Naive thymus-derived CD8-positive, alpha-beta T cell (primary cell): ENCODE measurements at regions of chr3 and their contacts with region 1.

Region 1: DNA sequence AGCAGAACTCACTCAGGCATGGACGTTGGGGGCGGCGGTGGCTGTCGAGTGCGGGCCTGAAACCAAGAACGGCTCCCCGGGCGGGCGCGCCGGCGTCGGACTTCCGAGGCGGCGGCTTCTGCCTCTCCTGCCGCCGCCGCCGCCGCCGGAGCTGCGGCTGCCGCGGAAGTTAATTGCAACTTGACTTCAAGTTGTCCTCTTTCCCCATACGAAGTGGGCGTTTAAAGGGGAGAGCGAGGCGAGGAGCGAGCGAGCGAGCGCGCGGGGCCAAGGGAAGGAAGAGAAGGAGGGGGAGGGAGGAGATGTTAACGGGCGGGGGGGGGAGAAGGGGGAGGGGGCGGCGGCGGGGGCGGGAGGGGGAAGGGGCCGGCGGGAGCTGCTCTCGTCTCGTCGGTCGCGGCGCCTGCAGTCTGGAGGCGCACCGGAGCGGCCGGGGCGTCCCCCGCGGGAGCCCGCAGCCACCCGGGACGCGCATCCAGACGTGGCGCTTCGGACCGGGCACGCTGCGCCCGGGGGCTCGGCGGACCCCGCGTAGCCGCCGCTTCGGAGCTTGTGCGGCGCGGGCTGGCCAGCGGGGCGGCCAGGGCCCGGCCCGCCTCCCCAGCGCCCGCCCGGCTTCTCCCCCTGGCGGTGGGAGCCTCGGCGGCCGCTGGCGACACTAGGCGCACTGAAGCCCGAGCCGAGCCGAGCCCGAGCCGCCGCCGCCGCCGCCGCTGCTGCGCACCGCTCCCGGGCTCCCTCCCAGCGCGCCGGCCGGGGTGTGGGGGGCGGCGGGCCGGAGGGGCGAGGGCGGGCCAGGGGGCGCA is 19.7 kb upstream of the SATB1 start:
- DNase-seq: peak; percentile 78 to 94 (median 84)
- ATAC-seq: peak; percentile 69 to 70
- H3K4me3 Mint-ChIP-seq: peak overlapping the region; percentile 87 to 99 (median 96)
- H3K27ac Mint-ChIP-seq: peak overlapping the region; percentile 94 to 99 (median 96)
- H3K4me1 Mint-ChIP-seq: peaks cover 14 to 60% (median 43%) of the 10 kb centered on the region in 4 donors
- H3K27me3 Mint-ChIP-seq: no peaks in the 10 kb centered on the region

Region 2: DNA sequence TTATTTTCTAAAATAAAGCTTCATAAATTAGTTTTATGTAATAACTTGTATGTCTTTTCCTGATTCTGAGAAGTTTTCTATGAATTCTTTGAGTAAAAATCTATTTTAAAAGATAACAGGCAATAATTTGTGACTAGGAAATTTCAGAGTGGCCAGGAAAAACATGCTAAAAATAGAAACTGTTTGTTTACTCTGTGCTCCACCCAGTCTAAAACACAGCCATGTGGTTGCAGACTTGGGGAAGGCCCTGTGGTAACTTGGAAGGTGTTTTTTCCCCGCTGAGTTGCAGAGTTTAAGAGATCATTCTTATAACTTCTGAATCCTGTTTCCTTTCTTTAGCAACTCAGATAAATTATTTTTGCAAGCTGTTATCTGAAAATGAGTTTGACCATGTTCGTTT is 1538.1 kb before region 1 on chr3:
- POLR2A ChIA-PET with region 1: no interaction called
- DNase-seq: peak in 2 of 10 donors; percentile 24 to 34
- ATAC-seq: peak; percentile 50 to 71
- H3K4me3 Mint-ChIP-seq: peak overlapping the region in 9 of 10 donors; percentile 45 to 60 (median 54)
- H3K27ac Mint-ChIP-seq: peak overlapping the region in 8 of 10 donors; percentile 62 to 96 (median 72)
- H3K4me1 Mint-ChIP-seq: peaks cover 46 to 92% (median 80%) of the 10 kb centered on the region in 4 donors
- H3K27me3 Mint-ChIP-seq: no peaks in the 10 kb centered on the region

Region 3: DNA sequence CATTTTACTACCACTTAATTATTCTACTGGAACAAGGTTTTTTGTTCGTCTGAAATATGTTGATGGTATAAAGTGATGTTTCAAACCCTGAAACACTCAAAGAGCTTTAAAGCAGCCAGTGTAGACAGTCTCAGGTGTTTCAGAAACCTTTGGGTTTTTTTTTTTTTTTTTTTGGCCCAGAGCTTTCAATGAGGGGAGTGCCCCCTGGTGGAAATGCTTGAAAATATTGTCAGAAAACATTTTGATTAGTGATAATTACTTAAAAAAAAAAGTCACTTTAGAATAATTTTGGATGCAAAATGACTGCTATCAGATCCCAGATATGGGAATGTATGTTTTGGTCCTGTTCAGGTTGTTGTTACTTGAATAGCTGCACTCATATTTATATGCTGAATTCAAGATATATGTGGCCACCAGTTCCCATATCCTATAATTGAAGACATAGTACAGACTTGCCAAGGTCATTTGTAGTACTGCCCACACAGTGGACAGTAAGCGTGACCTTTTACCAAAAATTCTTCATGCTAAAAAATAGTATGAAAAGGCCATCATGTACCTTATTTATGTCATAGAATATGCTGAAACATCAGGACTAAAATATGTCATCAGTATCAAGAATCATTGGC is 55.6 kb before region 1 on chr3:
- POLR2A ChIA-PET with region 1: interaction called, 16 read pairs
- DNase-seq: peak in 4 of 10 donors; percentile 21 to 57 (median 54)
- ATAC-seq: peak; percentile 32 to 53
- H3K4me3 Mint-ChIP-seq: peak overlapping the region in 6 of 10 donors; percentile 5 to 45 (median 40)
- H3K27ac Mint-ChIP-seq: peak overlapping the region in 7 of 10 donors; percentile 43 to 83 (median 48)
- H3K4me1 Mint-ChIP-seq: peaks cover 19 to 84% (median 65%) of the 10 kb centered on the region in 4 donors
- H3K27me3 Mint-ChIP-seq: no peaks in the 10 kb centered on the region

Region 4: DNA sequence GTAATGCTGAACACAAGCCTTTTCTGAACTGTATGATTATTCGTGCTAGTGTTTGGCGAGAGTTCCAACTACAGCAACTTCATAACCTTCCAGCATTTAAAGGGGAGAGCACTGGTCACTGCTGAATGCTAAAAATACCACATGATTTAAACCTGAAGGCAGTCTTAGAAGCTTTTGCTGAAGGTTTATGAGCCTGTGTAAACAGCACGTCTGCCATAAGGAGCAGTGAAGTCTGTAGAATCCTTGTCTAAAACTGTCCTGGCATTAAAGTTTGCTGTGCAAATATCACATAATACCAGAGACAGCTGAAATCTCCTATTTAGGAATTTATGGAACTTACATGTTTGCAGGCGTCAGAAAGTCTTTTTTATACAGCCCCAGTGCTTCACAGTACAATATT is 25.6 kb before region 1 on chr3:
- POLR2A ChIA-PET with region 1: interaction called, 65 read pairs
- DNase-seq: no peak
- ATAC-seq: no peak
- H3K4me3 Mint-ChIP-seq: peak overlapping the region; percentile 62 to 96 (median 84)
- H3K27ac Mint-ChIP-seq: peak overlapping the region; percentile 91 to 99 (median 95)
- H3K4me1 Mint-ChIP-seq: peaks cover 44 to 88% (median 81%) of the 10 kb centered on the region in 4 donors
- H3K27me3 Mint-ChIP-seq: no peaks in the 10 kb centered on the region

Region 5: DNA sequence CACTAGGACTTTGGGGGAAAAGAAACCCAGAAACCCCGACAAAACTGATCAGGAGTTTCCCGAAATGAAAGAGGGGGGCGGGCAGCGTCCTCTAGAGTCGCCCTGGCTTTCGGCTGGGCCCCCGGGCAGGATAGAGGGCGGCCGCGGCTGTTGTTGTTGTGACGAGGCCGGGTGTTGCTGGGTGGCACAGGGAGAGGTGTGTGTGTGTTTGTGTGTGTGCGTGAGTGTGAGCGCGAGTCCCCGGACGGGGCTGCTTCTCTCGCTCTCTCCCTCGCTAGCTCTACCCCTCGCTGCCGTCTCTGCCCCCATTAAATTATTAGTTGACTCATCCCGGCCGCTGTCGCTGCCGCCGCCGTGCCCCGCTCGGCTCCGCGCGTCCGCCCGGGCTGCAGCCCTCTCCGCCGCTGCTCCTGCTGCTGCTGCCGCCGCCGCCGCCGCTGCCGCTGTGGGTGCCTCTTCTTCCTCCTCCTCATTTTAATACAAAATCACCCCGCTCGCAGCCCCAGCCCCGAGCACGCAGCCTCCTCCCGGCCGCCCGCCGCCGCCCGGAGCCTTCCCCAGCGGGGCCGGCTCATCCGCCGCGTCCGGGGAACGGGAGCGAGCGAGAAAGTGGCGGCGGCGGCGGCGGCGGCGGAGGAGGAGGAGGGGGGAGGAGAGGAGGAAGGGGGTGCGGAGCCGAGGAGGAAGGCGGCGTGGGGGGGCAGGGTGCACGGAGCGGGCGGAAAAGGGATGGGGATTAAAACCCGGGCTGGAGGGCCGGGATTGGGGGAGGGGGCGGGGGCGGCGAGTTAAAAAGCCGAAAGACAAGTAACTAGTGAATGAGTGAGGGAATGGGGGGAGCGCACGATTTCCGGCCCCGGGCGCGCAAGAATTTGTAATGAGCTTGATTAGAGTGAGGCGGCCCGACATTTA is 19.8 kb before region 1 on chr3 and contains the start of gene SATB1:
- POLR2A ChIA-PET with region 1: interaction called, 65 read pairs
- DNase-seq: peak; percentile 48 to 81 (median 64)
- ATAC-seq: peak; percentile 18 to 41
- H3K4me3 Mint-ChIP-seq: peak within 1 kb of the TSS; percentile 93 to 99 (median 96)
- H3K27ac Mint-ChIP-seq: peak within 1 kb of the TSS; percentile 94 to 99 (median 99)
- H3K4me1 Mint-ChIP-seq: peaks cover 37 to 79% (median 65%) of the 10 kb centered on the region in 4 donors
- H3K27me3 Mint-ChIP-seq: no peaks in the 10 kb centered on the region
- polyA plus RNA-seq, gene SATB1: 196 to 265 (median 242) TPM

Region 6: GRCh38 chr3:18431266-18431665 is 13.5 kb before region 1 on chr3:
- POLR2A ChIA-PET with region 1: interaction called, 18 read pairs
- DNase-seq: no peak
- ATAC-seq: peak; percentile 6 to 9
- H3K4me3 Mint-ChIP-seq: peak overlapping the region; percentile 64 to 94 (median 86)
- H3K27ac Mint-ChIP-seq: peak overlapping the region; percentile 89 to 98 (median 94)
- H3K4me1 Mint-ChIP-seq: peaks cover 37 to 85% (median 74%) of the 10 kb centered on the region in 4 donors
- H3K27me3 Mint-ChIP-seq: no peaks in the 10 kb centered on the region

Region 7: DNA sequence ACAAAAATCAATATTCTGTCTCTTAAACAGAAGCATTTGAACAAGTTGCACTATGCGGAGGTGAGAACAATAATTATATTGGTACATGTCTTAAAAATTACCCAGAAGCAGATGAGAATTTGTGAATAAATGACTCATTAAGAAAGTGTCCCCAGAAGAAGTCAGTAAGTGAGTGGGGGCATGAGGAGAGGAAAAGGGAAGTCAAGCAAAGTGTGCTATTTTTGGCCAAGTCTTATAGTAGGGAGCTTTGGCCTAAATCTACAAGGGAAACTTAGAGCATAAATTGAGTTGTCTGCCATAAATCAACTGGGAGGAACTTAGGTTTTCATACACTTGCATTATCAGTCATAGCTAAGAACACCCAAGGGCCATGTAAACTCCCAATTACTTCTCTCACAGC is 67.2 kb after region 1 on chr3:
- POLR2A ChIA-PET with region 1: no interaction called
- DNase-seq: no peak
- ATAC-seq: no peak
- H3K4me3 Mint-ChIP-seq: no peak overlapping the region
- H3K27ac Mint-ChIP-seq: peak overlapping the region in 4 of 10 donors; percentile 8 to 46 (median 20)
- H3K4me1 Mint-ChIP-seq: peaks cover 7 to 34% (median 22%) of the 10 kb centered on the region in 4 donors
- H3K27me3 Mint-ChIP-seq: no peaks in the 10 kb centered on the region

Region 8: DNA sequence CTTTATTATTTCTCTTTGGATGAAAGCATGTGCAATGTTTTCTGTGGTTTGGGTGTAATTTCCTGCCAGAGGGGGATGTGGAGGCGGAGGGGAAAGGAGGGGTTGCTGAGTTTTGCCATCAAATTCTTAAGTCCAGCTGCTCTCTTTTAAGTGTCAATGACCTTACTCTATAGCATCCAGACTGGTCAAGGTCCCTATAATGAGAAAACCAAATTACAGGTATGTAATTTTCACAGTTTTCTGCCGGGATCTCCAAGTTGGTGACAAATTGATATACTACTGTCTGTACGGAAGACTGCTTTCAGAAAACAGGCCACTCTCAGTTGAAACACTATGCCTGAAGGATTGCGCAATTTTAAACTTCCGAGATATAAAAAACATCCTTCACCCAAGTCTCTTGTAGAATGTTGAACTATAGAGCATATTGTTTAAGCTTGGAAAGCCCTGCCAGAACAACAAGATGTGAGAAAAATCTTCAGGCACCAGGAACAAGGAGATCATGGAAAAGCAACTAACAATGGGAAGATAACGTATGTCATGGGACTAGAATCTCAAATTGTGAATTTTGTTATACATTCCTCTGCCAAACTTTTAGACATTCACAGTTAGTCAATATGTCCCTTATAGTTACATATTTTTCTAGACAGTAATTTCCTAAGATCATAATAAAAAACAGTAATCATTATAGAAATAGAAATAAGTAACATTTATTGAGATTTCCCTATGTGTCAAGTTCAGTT is 281.0 kb after region 1 on chr3:
- POLR2A ChIA-PET with region 1: interaction called, 11 read pairs
- DNase-seq: peak in 4 of 10 donors; percentile 13 to 72 (median 69)
- ATAC-seq: peak; percentile 77 to 82
- H3K4me3 Mint-ChIP-seq: peak overlapping the region; percentile 57 to 90 (median 74)
- H3K27ac Mint-ChIP-seq: peak overlapping the region; percentile 93 to 100 (median 96)
- H3K4me1 Mint-ChIP-seq: peaks cover 42 to 77% (median 71%) of the 10 kb centered on the region in 4 donors
- H3K27me3 Mint-ChIP-seq: no peaks in the 10 kb centered on the region

Region 9: DNA sequence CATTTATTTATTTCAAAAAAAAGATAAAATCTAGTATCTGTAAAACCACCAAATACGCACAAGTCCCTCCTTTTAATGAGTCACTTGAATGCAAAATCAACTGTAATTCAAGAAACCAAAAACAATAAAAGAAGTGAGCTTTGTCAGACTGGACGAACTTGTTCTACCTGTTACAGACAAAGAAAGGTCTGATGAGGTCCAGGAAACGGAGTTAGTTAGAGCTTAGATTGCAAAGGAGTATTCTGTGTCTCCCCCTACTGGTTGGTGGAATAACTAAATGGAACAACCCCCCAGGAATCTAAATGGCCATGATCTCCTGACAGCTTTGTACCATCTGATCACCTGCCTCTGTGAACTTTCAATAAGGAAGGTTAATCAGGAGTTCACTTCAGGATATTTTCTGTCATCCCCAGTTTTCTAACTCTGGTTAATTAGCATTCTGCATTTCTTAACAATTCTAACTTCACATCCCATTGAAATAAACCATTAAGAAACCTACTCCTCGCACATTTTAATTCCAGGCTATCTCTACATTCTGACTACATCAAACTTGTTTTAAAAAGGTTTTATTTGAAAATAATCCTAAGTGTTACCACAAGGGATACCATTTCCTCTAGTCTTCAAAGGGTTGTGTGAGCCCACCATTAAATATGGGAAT is 313.4 kb after region 1 on chr3:
- POLR2A ChIA-PET with region 1: interaction called, 22 read pairs
- DNase-seq: peak in 8 of 10 donors; percentile 31 to 83 (median 63)
- ATAC-seq: peak; percentile 97 to 98
- H3K4me3 Mint-ChIP-seq: peak overlapping the region in 3 of 10 donors; percentile 1 to 16 (median 14)
- H3K27ac Mint-ChIP-seq: peak overlapping the region; percentile 5 to 89 (median 73)
- H3K4me1 Mint-ChIP-seq: peaks cover 20 to 41% (median 40%) of the 10 kb centered on the region in 4 donors
- H3K27me3 Mint-ChIP-seq: no peaks in the 10 kb centered on the region